MCF 10A (cell line): ENCODE measurements at regions of chr15 and their contacts with region 1.

Region 1: DNA sequence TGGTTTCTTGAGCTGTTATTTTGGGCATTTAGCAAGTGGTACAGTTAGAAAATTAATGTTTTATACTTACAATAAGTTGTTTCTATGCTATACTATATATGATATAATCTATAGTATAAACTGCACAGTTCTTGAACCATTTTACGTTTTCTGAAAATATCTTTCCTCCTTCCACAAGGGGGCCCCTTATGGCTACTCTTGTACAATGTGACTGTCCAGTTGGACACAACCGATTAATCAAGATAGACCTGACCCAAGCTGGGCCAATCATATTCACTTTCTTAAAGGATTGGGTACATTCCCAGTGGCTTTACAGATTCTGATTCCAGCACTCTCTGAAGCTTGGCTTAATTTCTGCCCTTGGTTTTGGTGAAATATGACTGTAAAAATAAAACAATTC is 953.4 kb downstream of the AGBL1 start:
- DNase-seq: peak; percentile 12
- H3K4me3 Mint-ChIP-seq: no peak overlapping the region
- H3K27ac Mint-ChIP-seq: peak overlapping the region; percentile 64
- H3K4me1 Mint-ChIP-seq: peaks cover 20% of the 10 kb centered on the region
- H3K27me3 Mint-ChIP-seq: no peaks in the 10 kb centered on the region
- CTCF ChIP-seq: no peak

Region 2: GRCh38 chr15:87604857-87605446 is 571.9 kb after region 1 on chr15:
- CTCF ChIA-PET with region 1: interaction called, 6 read pairs
- POLR2A ChIA-PET with region 1: no interaction called
- intact Hi-C with region 1: loop called (anchors 2 kb)
- DNase-seq: peak; percentile 19
- H3K4me3 Mint-ChIP-seq: no peak overlapping the region
- H3K27ac Mint-ChIP-seq: no peak overlapping the region
- H3K4me1 Mint-ChIP-seq: peaks cover 12% of the 10 kb centered on the region
- H3K27me3 Mint-ChIP-seq: no peaks in the 10 kb centered on the region
- CTCF ChIP-seq: peak; percentile 60